HAP-1 (cell line): ENCODE measurements at regions of chr3 and their contacts with region 1.

Region 1: GRCh38 chr3:16056210-16056607 is 118.3 kb upstream of the GALNT15 start:
- DNase-seq: no peak
- H3K4me3 ChIP-seq: no peak overlapping the region
- H3K4me1 ChIP-seq: no peaks in the 10 kb centered on the region
- H3K27me3 ChIP-seq: no peaks in the 10 kb centered on the region

Region 2: GRCh38 chr3:16247276-16248061 is 191.3 kb after region 1 on chr3:
- in situ Hi-C with region 1: loop called (anchors 10 kb)
- DNase-seq: peak; percentile 71 to 86
- H3K4me3 ChIP-seq: no peak overlapping the region
- H3K4me1 ChIP-seq: no peaks in the 10 kb centered on the region
- H3K27me3 ChIP-seq: 0 out of 2 replicates have a peak, but pooled peaks cover 2% of the 10 kb centered on the region